Activated naive CD4-positive, alpha-beta T cell treated with anti-CD3 and anti-CD28 coated beads, Interleukin-2, amount 10 ng/mL, durations not matched to agents 7 days and 5 days (primary cell): ENCODE measurements at regions of chr11 and their contacts with region 1.

Region 1: GRCh38 chr11:2975594-2975993 is 16.5 kb downstream of the NAP1L4 start:
- DNase-seq: peak; percentile 65
- H3K4me3 Mint-ChIP-seq: no peak overlapping the region
- H3K27ac Mint-ChIP-seq: peak overlapping the region; percentile 37
- H3K4me1 Mint-ChIP-seq: peaks cover 27% of the 10 kb centered on the region
- H3K27me3 Mint-ChIP-seq: no peaks in the 10 kb centered on the region

Region 2: GRCh38 chr11:2923446-2924375 is 51.9 kb before region 1 on chr11:
- CTCF ChIA-PET with region 1: no interaction called
- DNase-seq: no peak
- H3K4me3 Mint-ChIP-seq: no peak overlapping the region
- H3K27ac Mint-ChIP-seq: no peak overlapping the region
- H3K4me1 Mint-ChIP-seq: peaks cover 11% of the 10 kb centered on the region
- H3K27me3 Mint-ChIP-seq: peaks cover 41% of the 10 kb centered on the region

Region 3: GRCh38 chr11:2992234-2992996 is 16.8 kb after region 1 on chr11 and contains the start of gene NAP1L4:
- CTCF ChIA-PET with region 1: interaction called, 13 read pairs
- DNase-seq: peak; percentile 98
- H3K4me3 Mint-ChIP-seq: peak within 1 kb of the TSS; percentile 96
- H3K27ac Mint-ChIP-seq: peak within 1 kb of the TSS; percentile 98
- H3K4me1 Mint-ChIP-seq: peaks cover 31% of the 10 kb centered on the region
- H3K27me3 Mint-ChIP-seq: peaks cover 4% of the 10 kb centered on the region

Region 4: DNA sequence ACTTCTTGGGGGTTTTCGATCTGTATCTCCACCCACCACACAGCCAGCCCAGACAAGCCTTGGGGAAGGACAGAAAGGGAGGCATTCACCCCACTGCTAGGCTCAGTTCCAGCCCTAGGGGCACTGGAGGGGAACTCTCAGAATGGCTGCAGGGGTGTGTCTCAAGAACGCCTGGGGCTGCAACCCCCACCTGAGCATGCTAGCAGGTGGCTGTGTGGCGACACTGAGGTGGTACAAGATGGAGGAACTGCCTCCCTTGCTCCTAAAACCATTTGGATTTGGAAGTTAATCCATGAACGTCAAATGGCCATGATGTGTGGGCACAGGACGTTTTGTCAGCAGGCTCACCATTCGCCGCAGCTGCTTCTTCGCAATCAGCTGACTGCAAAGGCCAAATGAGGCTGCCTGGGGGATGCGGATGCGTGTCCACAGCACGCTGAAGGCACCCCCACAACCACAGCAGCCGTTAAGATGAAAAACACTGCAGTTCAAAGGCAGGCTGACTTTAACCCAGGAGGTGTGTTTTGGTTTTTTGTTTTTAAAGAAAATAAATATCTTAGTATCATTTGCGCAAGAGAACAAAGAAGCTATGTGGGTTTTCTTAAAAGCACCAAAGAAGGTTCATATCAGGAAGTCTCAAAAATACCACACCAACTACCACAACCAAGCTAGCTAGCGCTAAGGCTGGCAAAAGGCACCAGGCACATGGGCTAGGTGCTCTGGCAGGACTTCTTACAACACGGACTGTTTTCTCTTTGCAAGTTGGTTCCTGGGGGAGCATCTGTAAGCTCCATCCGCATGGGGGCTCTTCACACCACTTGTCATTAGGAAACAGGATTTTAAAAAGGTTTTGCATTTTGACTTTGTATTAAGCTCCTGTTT is 38.7 kb after region 1 on chr11:
- CTCF ChIA-PET with region 1: interaction called, 60 read pairs
- DNase-seq: peak; percentile 93
- H3K4me3 Mint-ChIP-seq: peak overlapping the region; percentile 45
- H3K27ac Mint-ChIP-seq: peak overlapping the region; percentile 99
- H3K4me1 Mint-ChIP-seq: peaks cover 95% of the 10 kb centered on the region
- H3K27me3 Mint-ChIP-seq: no peaks in the 10 kb centered on the region

Region 5: DNA sequence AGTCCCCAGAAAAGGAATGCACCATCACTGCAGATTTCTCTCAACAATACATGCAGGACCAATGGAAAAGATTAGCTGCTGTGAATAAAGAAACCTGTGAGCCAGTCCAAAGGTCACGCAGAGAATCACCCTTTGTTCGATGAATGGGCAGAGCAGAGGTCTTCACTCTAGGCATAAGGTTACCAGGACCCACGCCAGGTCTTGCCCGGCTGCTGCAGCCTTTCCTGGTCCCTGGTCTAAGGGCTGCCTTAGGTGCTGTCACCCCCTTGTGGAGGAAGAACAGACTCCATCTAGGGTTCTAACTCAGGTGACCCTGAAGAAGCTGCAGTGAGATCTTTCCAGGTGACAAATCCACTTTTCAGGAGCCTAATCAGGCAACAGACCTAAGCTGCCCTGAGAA is 45.5 kb after region 1 on chr11:
- CTCF ChIA-PET with region 1: interaction called, 60 read pairs
- DNase-seq: peak; percentile 64
- H3K4me3 Mint-ChIP-seq: no peak overlapping the region
- H3K27ac Mint-ChIP-seq: no peak overlapping the region
- H3K4me1 Mint-ChIP-seq: peaks cover 68% of the 10 kb centered on the region
- H3K27me3 Mint-ChIP-seq: no peaks in the 10 kb centered on the region

Region 6: GRCh38 chr11:3037040-3037944 is 61.7 kb after region 1 on chr11:
- CTCF ChIA-PET with region 1: interaction called, 18 read pairs
- DNase-seq: peak; percentile 67
- H3K4me3 Mint-ChIP-seq: no peak overlapping the region
- H3K27ac Mint-ChIP-seq: peak overlapping the region; percentile 63
- H3K4me1 Mint-ChIP-seq: peaks cover 35% of the 10 kb centered on the region
- H3K27me3 Mint-ChIP-seq: no peaks in the 10 kb centered on the region